ENCODE measurements at regions of chr15 and their contacts with region 1.

Region 1: GRCh38 chr15:99502182-99502581 is 63.6 kb upstream of the MEF2A start:
- DNase-seq: peak in 1 of 2 donors; percentile 8
- H3K4me3 ChIP-seq: no peak overlapping the region
- CTCF ChIP-seq: no peak
- POLR2A ChIP-seq: no peak

Region 2: GRCh38 chr15:99466701-99467337 is 35.4 kb before region 1 on chr15:
- intact Hi-C with region 1: loop called (anchors 2 kb)
- DNase-seq: no peak
- H3K4me3 ChIP-seq: no peak overlapping the region
- CTCF ChIP-seq: no peak
- POLR2A ChIP-seq: no peak